Left ventricle myocardium inferior (tissue), 1 donor: ENCODE measurements at regions of chr4 and their contacts with region 1.

Region 1: GRCh38 chr4:152849350-152849749 is 69.6 kb downstream of the ARFIP1 start:
- DNase-seq: no peak
- H3K4me3 ChIP-seq: no peak overlapping the region
- H3K27ac ChIP-seq: no peak overlapping the region
- H3K4me1 ChIP-seq: peaks cover 20% of the 10 kb centered on the region
- H3K27me3 ChIP-seq: no peaks in the 10 kb centered on the region
- CTCF ChIP-seq: no peak

Region 2: GRCh38 chr4:153023681-153024394 is 174.5 kb after region 1 on chr4:
- intact Hi-C with region 1: no loop called
- DNase-seq: no peak
- H3K4me3 ChIP-seq: no peak overlapping the region
- H3K27ac ChIP-seq: no peak overlapping the region
- H3K4me1 ChIP-seq: no peaks in the 10 kb centered on the region
- H3K27me3 ChIP-seq: peaks cover 46% of the 10 kb centered on the region
- CTCF ChIP-seq: no peak

Region 3: DNA sequence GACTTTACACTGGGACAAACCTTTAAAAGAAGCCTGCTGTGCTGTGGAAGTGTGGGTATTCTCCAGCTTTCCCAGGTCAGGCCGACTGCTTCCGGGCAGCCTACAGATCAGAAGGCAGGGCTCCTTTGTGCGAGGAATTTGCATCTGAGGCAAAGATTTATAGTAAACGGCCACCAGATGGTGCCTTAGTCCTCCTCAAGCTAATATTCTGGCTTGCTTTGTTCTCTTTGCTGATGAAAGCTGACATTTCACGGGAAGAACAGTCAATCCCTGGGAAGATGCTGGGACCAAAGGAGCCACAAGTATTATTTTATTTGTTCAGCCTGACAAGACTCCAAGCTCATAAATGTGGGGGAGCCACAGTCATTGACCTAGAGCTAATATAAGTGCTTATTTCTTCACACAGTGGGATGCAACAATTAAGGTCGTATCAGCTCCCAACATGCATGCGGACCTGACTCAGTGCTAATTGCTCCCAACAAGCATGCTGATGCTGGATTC is 234.1 kb after region 1 on chr4:
- intact Hi-C with region 1: loop called (anchors 5 kb)
- DNase-seq: no peak
- H3K4me3 ChIP-seq: no peak overlapping the region
- H3K27ac ChIP-seq: no peak overlapping the region
- H3K4me1 ChIP-seq: peaks cover 4% of the 10 kb centered on the region
- H3K27me3 ChIP-seq: peaks cover 7% of the 10 kb centered on the region
- CTCF ChIP-seq: peak; percentile 71

Region 4: DNA sequence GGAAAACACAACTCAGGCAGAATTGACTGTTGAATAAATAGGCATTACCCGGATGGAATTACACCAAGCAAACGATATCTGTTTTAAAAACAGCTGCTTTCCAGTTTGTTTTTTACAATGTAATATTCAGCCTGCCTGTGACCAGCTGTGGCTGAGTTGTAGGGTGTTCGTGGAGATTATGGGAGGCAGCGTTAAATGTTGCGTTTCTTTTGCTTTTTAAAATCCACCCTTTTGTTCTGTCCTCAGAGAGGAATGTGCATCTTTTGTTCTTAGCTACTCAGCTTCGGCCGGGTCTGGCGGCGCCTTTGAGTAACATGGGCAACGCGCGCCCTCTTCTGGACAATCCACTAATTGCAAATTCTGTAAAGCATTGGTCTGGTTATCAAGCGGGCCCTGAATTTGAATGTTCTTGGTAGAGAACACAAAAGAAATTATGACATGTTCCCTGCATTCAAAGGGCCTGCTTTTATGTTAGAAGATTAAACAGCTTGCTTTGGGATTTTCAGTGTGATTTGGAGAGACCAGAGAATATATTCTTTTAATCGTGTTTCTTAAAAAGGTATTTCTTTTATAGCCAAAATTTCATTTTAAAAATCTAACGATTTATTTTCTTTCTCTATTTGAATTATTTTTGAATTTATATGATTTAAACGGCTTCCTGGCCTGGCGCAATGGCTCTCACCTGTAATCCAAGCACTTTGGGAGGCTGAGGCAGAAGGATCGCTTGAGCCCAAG is 278.6 kb after region 1 on chr4:
- intact Hi-C with region 1: loop called (anchors 5 kb)
- DNase-seq: peak; percentile 68
- H3K4me3 ChIP-seq: peak overlapping the region; percentile 29
- H3K27ac ChIP-seq: no peak overlapping the region
- H3K4me1 ChIP-seq: peaks cover 4% of the 10 kb centered on the region
- H3K27me3 ChIP-seq: peaks cover 10% of the 10 kb centered on the region
- CTCF ChIP-seq: peak; percentile 90

Region 5: DNA sequence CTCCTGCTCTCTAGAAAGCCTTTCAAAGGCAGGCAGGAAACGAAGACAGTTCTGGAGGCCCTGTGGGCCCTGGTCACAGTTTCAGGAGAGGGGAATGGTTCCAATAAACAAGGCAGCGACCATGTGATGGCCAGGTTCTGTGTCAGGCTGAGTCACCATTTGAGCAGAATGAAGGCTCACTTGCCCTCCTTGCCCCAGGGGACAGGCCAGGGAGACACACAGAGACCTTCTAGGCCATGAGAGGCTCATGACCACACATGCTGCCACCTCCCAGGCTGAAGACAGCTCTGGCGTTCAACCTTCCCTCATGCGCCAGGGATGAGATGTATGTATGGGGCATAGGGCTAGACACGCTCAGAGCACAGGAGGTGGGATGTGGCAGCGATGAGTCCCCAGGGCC is 331.9 kb after region 1 on chr4:
- intact Hi-C with region 1: no loop called
- DNase-seq: no peak
- H3K4me3 ChIP-seq: no peak overlapping the region
- H3K27ac ChIP-seq: no peak overlapping the region
- H3K4me1 ChIP-seq: no peaks in the 10 kb centered on the region
- H3K27me3 ChIP-seq: no peaks in the 10 kb centered on the region
- CTCF ChIP-seq: no peak